Activated CD8-positive, alpha-beta memory T cell treated with anti-CD3 and anti-CD28 coated beads, Interleukin-2, amount 10 ng/mL, durations not matched to agents 7 days and 5 days (primary cell): ENCODE measurements at regions of chr1 and their contacts with region 1.

Region 1: GRCh38 chr1:150053926-150054325 is 13.7 kb upstream of the VPS45 start:
- DNase-seq: no peak
- ATAC-seq: no peak
- H3K4me3 Mint-ChIP-seq: no peak overlapping the region
- H3K27ac Mint-ChIP-seq: no peak overlapping the region
- H3K4me1 Mint-ChIP-seq: peaks cover 8% of the 10 kb centered on the region
- H3K27me3 Mint-ChIP-seq: peaks cover 10% of the 10 kb centered on the region

Region 2: GRCh38 chr1:150034336-150034735 is 19.6 kb before region 1 on chr1:
- CTCF ChIA-PET with region 1: interaction called, 10 read pairs
- DNase-seq: no peak
- ATAC-seq: no peak
- H3K4me3 Mint-ChIP-seq: no peak overlapping the region
- H3K27ac Mint-ChIP-seq: no peak overlapping the region
- H3K4me1 Mint-ChIP-seq: no peaks in the 10 kb centered on the region
- H3K27me3 Mint-ChIP-seq: peaks cover 13% of the 10 kb centered on the region